Naive thymus-derived CD4-positive, alpha-beta T cell (primary cell): ENCODE measurements at regions of chr1 and their contacts with region 1.

Region 1: DNA sequence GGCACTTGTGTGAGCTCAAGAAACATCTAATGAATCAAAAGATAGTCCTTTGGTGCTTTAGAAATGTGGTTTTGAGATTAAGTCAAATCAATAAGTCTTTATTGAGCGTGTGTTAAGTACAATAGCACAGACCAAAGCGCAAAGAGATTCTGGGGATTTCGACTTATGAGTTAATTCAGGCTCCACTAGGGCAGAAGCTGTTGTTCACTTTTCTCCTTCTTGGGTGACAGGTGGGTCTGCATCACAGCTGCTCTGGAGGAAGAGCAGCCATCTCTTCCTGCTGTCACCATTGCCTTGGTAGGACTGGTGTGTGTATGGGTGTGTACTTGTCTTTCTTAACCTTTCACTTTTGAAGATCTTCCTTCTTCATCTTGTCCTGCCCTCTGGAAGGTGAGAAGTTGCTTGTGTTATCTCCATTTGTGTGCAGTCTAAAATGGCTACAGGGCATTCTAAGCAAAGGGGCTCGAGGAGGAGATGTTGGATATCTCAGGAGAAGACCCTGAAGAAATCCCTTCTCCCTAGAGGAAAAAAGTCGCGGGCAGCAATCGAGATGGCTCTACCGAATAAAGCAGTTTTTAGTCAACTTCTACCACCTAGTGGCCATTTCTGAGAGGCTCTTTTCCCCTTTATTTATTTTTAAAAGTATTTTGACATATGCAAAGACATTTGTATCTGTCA is 22.9 kb upstream of the DISC1 start:
- DNase-seq: peak; percentile 13 to 72 (median 67)
- ATAC-seq: peak; percentile 87
- H3K4me3 ChIP-seq: peak overlapping the region; percentile 67
- H3K4me3 Mint-ChIP-seq: peak overlapping the region; percentile 77 to 98 (median 94)
- H3K27ac ChIP-seq: peak overlapping the region; percentile 70
- H3K27ac Mint-ChIP-seq: peak overlapping the region; percentile 79 to 96 (median 87)
- H3K4me1 ChIP-seq: no peaks in the 10 kb centered on the region
- H3K4me1 Mint-ChIP-seq: peaks cover 8 to 19% (median 11%) of the 10 kb centered on the region in 7 donors
- H3K27me3 ChIP-seq: no peaks in the 10 kb centered on the region
- H3K27me3 Mint-ChIP-seq: peaks cover 0 to 18% (median 0%) of the 10 kb centered on the region in 5 donors

Region 2: GRCh38 chr1:230917284-230918135 is 686.2 kb before region 1 on chr1:
- CTCF ChIA-PET with region 1: no interaction called
- POLR2A ChIA-PET with region 1: no interaction called
- intact Hi-C with region 1: loop called (anchors 1 to 10 kb)
- DNase-seq: peak; percentile 33 to 74 (median 67)
- ATAC-seq: peak; percentile 81
- H3K4me3 ChIP-seq: no peak overlapping the region
- H3K4me3 Mint-ChIP-seq: no peak overlapping the region
- H3K27ac ChIP-seq: no peak overlapping the region
- H3K27ac Mint-ChIP-seq: peak overlapping the region in 5 of 9 donors; percentile 17 to 32 (median 24)
- H3K4me1 ChIP-seq: no peaks in the 10 kb centered on the region
- H3K4me1 Mint-ChIP-seq: peaks cover 0 to 11% (median 0%) of the 10 kb centered on the region in 7 donors
- H3K27me3 ChIP-seq: no peaks in the 10 kb centered on the region
- H3K27me3 Mint-ChIP-seq: no peaks in the 10 kb centered on the region

Region 3: GRCh38 chr1:231240883-231241735 is 362.6 kb before region 1 on chr1 and contains the start of gene GNPAT:
- CTCF ChIA-PET with region 1: no interaction called
- POLR2A ChIA-PET with region 1: no interaction called
- intact Hi-C with region 1: loop called (anchors 2 kb)
- DNase-seq: peak; percentile 86 to 97 (median 92)
- ATAC-seq: peak; percentile 98
- H3K4me3 ChIP-seq: peak within 1 kb of the TSS; percentile 98
- H3K4me3 Mint-ChIP-seq: peak within 1 kb of the TSS; percentile 90 to 99 (median 95)
- H3K27ac ChIP-seq: peak within 1 kb of the TSS; percentile 93
- H3K27ac Mint-ChIP-seq: peak within 1 kb of the TSS; percentile 92 to 99 (median 97)
- H3K4me1 ChIP-seq: peaks cover 17 to 44% of the 10 kb centered on the region in 2 donors
- H3K4me1 Mint-ChIP-seq: peaks cover 47 to 86% (median 76%) of the 10 kb centered on the region in 7 donors
- H3K27me3 ChIP-seq: no peaks in the 10 kb centered on the region
- H3K27me3 Mint-ChIP-seq: no peaks in the 10 kb centered on the region
- total RNA-seq, gene GNPAT: 17.3 to 41.0 (median 35.5) TPM

Region 4: GRCh38 chr1:231315887-231316286 is 287.9 kb before region 1 on chr1:
- CTCF ChIA-PET with region 1: interaction called, 5 read pairs
- POLR2A ChIA-PET with region 1: no interaction called
- intact Hi-C with region 1: loop called (anchors 1 kb)
- DNase-seq: peak in 5 of 9 donors; percentile 11 to 43 (median 19)
- ATAC-seq: peak; percentile 68
- H3K4me3 ChIP-seq: no peak overlapping the region
- H3K4me3 Mint-ChIP-seq: no peak overlapping the region
- H3K27ac ChIP-seq: no peak overlapping the region
- H3K27ac Mint-ChIP-seq: peak overlapping the region in 1 of 9 donors; percentile 76
- H3K4me1 ChIP-seq: no peaks in the 10 kb centered on the region
- H3K4me1 Mint-ChIP-seq: peaks cover 0 to 4% (median 0%) of the 10 kb centered on the region in 7 donors
- H3K27me3 ChIP-seq: no peaks in the 10 kb centered on the region
- H3K27me3 Mint-ChIP-seq: peaks cover 0 to 4% (median 0%) of the 10 kb centered on the region in 5 donors

Region 5: DNA sequence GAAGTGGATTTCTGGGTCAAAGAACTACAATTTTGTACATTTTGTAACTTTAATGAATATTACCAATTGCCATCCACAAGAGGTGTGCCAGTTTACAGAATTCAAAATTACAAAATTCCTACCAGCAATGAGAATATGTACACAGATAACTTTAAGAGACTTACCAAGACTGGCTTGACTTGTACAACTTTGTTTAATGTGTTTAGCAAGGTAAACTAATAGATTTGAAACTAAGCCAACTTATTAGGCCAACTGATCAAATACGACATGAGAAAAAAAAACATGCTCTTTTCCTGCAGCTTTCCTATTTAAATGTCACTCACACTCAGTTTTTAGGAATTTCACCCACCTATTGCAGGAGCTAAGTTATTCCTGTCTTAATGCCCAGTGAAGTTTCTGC is 277.5 kb before region 1 on chr1:
- CTCF ChIA-PET with region 1: no interaction called
- POLR2A ChIA-PET with region 1: no interaction called
- intact Hi-C with region 1: no loop called
- DNase-seq: no peak
- ATAC-seq: no peak
- H3K4me3 ChIP-seq: no peak overlapping the region
- H3K4me3 Mint-ChIP-seq: no peak overlapping the region
- H3K27ac ChIP-seq: no peak overlapping the region
- H3K27ac Mint-ChIP-seq: no peak overlapping the region
- H3K4me1 ChIP-seq: no peaks in the 10 kb centered on the region
- H3K4me1 Mint-ChIP-seq: peaks cover 0 to 15% (median 4%) of the 10 kb centered on the region in 7 donors
- H3K27me3 ChIP-seq: no peaks in the 10 kb centered on the region
- H3K27me3 Mint-ChIP-seq: peaks cover 0 to 7% (median 0%) of the 10 kb centered on the region in 5 donors

Region 6: GRCh38 chr1:231357831-231358354 is 245.8 kb before region 1 on chr1:
- CTCF ChIA-PET with region 1: interaction called, 10 read pairs
- POLR2A ChIA-PET with region 1: no interaction called
- intact Hi-C with region 1: loop called (anchors 1 kb)
- DNase-seq: peak in 7 of 9 donors; percentile 36 to 64 (median 55)
- ATAC-seq: peak; percentile 91
- H3K4me3 ChIP-seq: no peak overlapping the region
- H3K4me3 Mint-ChIP-seq: no peak overlapping the region
- H3K27ac ChIP-seq: no peak overlapping the region
- H3K27ac Mint-ChIP-seq: peak overlapping the region in 7 of 9 donors; percentile 3 to 63 (median 27)
- H3K4me1 ChIP-seq: peaks cover 0 to 3% of the 10 kb centered on the region in 2 donors
- H3K4me1 Mint-ChIP-seq: peaks cover 2 to 15% (median 7%) of the 10 kb centered on the region in 7 donors
- H3K27me3 ChIP-seq: no peaks in the 10 kb centered on the region
- H3K27me3 Mint-ChIP-seq: no peaks in the 10 kb centered on the region